Left cardiac atrium (tissue), 4 donors: ENCODE measurements at regions of chr5 and their contacts with region 1.

Region 1: GRCh38 chr5:67677422-67677970 is 480.9 kb upstream of the CD180 start:
- DNase-seq: no peak
- ATAC-seq: peak in 1 of 2 donors; percentile 38

Region 2: DNA sequence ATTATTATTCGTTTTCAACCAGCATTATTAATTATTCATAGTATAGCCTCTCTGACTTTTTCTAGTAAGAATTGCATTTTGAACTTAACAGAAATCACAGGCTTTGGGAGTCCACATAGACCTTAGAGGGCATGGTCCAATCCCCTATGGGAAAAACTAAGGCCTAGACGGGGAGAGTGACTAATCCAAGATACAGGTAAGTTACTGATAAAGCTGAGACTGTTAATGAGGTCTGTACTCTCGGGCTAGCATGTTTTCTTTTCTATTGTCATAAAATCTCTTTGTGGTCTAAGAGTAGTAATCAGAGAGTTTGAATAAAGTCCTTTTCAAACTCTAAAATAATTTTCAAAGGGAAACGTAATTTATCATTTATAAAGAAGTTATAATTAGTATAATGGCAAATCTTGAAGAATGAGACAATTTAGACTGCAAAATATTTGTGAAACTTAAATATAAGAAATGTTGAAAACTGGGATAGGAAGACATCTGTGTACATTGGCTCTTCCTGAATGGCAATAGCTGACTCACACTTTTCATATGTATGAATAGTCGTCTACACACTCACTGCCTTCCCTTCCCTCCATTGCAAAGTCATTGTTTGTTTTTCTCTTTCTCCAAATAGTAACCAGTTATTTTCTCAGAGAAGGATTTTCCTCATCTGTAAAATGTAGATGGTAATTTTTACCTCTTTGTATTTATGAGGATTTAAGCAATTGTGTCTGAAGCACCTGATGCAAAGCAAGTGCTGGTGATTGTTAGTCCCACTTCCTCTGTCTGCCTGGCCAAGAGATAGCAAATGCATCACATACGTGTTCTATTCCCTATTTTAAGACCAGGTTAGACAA is 273.0 kb before region 1 on chr5:
- intact Hi-C with region 1: no loop called
- DNase-seq: no peak
- ATAC-seq: no peak

Region 3: GRCh38 chr5:68225188-68225910 is 547.9 kb after region 1 on chr5:
- intact Hi-C with region 1: loop called in 1 of 2 experiments (anchors 10 kb)
- DNase-seq: peak; percentile 76
- ATAC-seq: peak; percentile 54 to 58